Caco-2 (cell line): ENCODE measurements at regions of chr9 and their contacts with region 1.

Region 1: DNA sequence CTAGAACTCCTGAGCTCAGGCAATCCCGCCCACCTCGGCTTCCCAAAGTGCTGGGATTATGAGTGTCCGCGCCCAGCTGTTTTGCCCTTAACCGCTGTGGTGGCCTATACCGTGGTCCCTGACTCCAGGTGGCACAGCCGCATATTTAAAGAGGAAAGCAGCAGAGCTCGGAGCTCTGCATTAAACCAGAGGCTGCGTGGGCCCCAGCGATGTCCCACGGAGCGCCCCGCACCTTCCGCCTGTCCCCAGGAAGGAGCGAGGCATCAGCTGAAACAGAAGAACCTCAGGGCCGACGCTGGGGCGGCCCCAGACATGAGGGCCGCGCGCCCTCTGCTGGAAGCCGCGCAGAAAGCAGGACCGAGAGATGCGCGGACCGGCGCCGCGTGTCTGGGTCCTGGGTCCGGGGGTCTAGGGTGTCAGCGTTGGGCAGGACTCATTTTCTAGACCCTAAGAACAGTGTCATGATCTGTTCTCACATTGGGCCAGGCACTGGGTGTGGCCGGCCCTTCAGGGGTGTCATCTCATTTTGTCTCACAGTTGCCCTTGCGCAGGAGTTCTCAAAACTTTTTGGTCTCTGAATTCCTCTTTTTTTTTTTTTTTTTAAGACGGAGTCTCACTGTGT is 37.7 kb downstream of the LAMC3 start:
- DNase-seq: peak; percentile 61 to 81
- H3K4me3 ChIP-seq: no peak overlapping the region
- H3K4me3 Mint-ChIP-seq: no peak overlapping the region
- H3K27ac Mint-ChIP-seq: no peak overlapping the region
- H3K4me1 ChIP-seq: no peaks in the 10 kb centered on the region
- H3K4me1 Mint-ChIP-seq: no peaks in the 10 kb centered on the region
- H3K27me3 ChIP-seq: no peaks in the 10 kb centered on the region
- H3K27me3 Mint-ChIP-seq: no peaks in the 10 kb centered on the region
- CTCF ChIP-seq: peak; percentile 92 to 95

Region 2: GRCh38 chr9:130701056-130702022 is 345.4 kb before region 1 on chr9:
- CTCF ChIA-PET with region 1: no interaction called
- POLR2A ChIA-PET with region 1: no interaction called
- intact Hi-C with region 1: loop called (anchors 10 kb)
- DNase-seq: peak; percentile 75 to 85
- H3K4me3 ChIP-seq: no peak overlapping the region
- H3K4me3 Mint-ChIP-seq: no peak overlapping the region
- H3K27ac Mint-ChIP-seq: no peak overlapping the region
- H3K4me1 ChIP-seq: no peaks in the 10 kb centered on the region
- H3K4me1 Mint-ChIP-seq: peaks cover 9% of the 10 kb centered on the region
- H3K27me3 ChIP-seq: no peaks in the 10 kb centered on the region
- H3K27me3 Mint-ChIP-seq: no peaks in the 10 kb centered on the region
- CTCF ChIP-seq: peak; percentile 85 to 97

Region 3: GRCh38 chr9:130857864-130858738 is 188.6 kb before region 1 on chr9:
- CTCF ChIA-PET with region 1: interaction called, 11 read pairs
- POLR2A ChIA-PET with region 1: no interaction called
- intact Hi-C with region 1: no loop called
- DNase-seq: no peak
- H3K4me3 ChIP-seq: no peak overlapping the region
- H3K4me3 Mint-ChIP-seq: no peak overlapping the region
- H3K27ac Mint-ChIP-seq: no peak overlapping the region
- H3K4me1 ChIP-seq: peaks cover 1% of the 10 kb centered on the region
- H3K4me1 Mint-ChIP-seq: no peaks in the 10 kb centered on the region
- H3K27me3 ChIP-seq: no peaks in the 10 kb centered on the region
- H3K27me3 Mint-ChIP-seq: no peaks in the 10 kb centered on the region
- CTCF ChIP-seq: no peak

Region 4: GRCh38 chr9:130940693-130941576 is 105.8 kb before region 1 on chr9:
- CTCF ChIA-PET with region 1: interaction called, 4 read pairs
- POLR2A ChIA-PET with region 1: no interaction called
- intact Hi-C with region 1: loop called (anchors 5 kb)
- DNase-seq: peak; percentile 92 to 94
- H3K4me3 ChIP-seq: no peak overlapping the region
- H3K4me3 Mint-ChIP-seq: peak overlapping the region; percentile 47
- H3K27ac Mint-ChIP-seq: no peak overlapping the region
- H3K4me1 ChIP-seq: peaks cover 29% of the 10 kb centered on the region
- H3K4me1 Mint-ChIP-seq: peaks cover 14% of the 10 kb centered on the region
- H3K27me3 ChIP-seq: peaks cover 1% of the 10 kb centered on the region; the same call in 1 of the 2 replicates
- H3K27me3 Mint-ChIP-seq: peaks cover 28% of the 10 kb centered on the region
- CTCF ChIP-seq: peak; percentile 91 to 92

Region 5: GRCh38 chr9:131012396-131012917 is 34.2 kb before region 1 on chr9:
- CTCF ChIA-PET with region 1: interaction called, 11 read pairs
- POLR2A ChIA-PET with region 1: no interaction called
- intact Hi-C with region 1: loop called (anchors 5 kb)
- DNase-seq: peak in 1 of 2 experiments; percentile 30
- H3K4me3 ChIP-seq: no peak overlapping the region
- H3K4me3 Mint-ChIP-seq: no peak overlapping the region
- H3K27ac Mint-ChIP-seq: no peak overlapping the region
- H3K4me1 ChIP-seq: no peaks in the 10 kb centered on the region
- H3K4me1 Mint-ChIP-seq: no peaks in the 10 kb centered on the region
- H3K27me3 ChIP-seq: no peaks in the 10 kb centered on the region
- H3K27me3 Mint-ChIP-seq: peaks cover 6% of the 10 kb centered on the region
- CTCF ChIP-seq: no peak

Region 6: DNA sequence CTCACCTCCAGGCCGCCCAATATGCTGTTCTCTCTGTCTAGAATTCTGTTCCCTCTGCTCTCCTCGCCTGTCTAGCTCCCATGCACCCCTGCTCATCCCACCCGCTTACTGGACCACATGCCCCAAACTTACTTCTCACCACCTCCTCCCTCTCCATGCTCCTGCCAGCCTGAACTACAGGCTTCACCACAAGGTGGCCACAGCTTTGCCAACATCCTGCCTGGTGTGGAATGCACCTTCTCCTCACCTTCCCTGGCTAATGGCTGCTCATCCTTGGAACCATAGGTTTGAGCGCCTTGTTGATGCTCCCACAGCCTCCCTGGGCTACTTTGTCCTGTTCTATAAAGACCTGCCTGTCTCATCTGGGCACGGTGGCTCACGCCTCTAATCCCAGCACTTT is 28.1 kb before region 1 on chr9:
- CTCF ChIA-PET with region 1: interaction called, 11 read pairs
- POLR2A ChIA-PET with region 1: no interaction called
- intact Hi-C with region 1: loop called (anchors 5 kb)
- DNase-seq: peak in 1 of 2 experiments; percentile 39
- H3K4me3 ChIP-seq: no peak overlapping the region
- H3K4me3 Mint-ChIP-seq: no peak overlapping the region
- H3K27ac Mint-ChIP-seq: no peak overlapping the region
- H3K4me1 ChIP-seq: no peaks in the 10 kb centered on the region
- H3K4me1 Mint-ChIP-seq: no peaks in the 10 kb centered on the region
- H3K27me3 ChIP-seq: no peaks in the 10 kb centered on the region
- H3K27me3 Mint-ChIP-seq: peaks cover 16% of the 10 kb centered on the region
- CTCF ChIP-seq: peak in 1 of 2 experiments; percentile 37

Region 7: GRCh38 chr9:131138676-131139075 is 92.0 kb after region 1 on chr9:
- CTCF ChIA-PET with region 1: no interaction called
- POLR2A ChIA-PET with region 1: no interaction called
- intact Hi-C with region 1: no loop called
- DNase-seq: no peak
- H3K4me3 ChIP-seq: no peak overlapping the region
- H3K4me3 Mint-ChIP-seq: no peak overlapping the region
- H3K27ac Mint-ChIP-seq: no peak overlapping the region
- H3K4me1 ChIP-seq: no peaks in the 10 kb centered on the region
- H3K4me1 Mint-ChIP-seq: no peaks in the 10 kb centered on the region
- H3K27me3 ChIP-seq: no peaks in the 10 kb centered on the region
- H3K27me3 Mint-ChIP-seq: no peaks in the 10 kb centered on the region
- CTCF ChIP-seq: no peak